Left cardiac atrium (tissue), 4 donors: ENCODE measurements at regions of chr3 and their contacts with region 1.

Region 1: GRCh38 chr3:2268779-2269178 is 170.1 kb downstream of the CNTN4 start:
- DNase-seq: no peak
- ATAC-seq: no peak

Region 2: GRCh38 chr3:2921903-2922302 is 653.1 kb after region 1 on chr3:
- intact Hi-C with region 1: loop called in 1 of 2 experiments (anchors 5 kb)
- DNase-seq: no peak
- ATAC-seq: peak; percentile 75 to 80